ENCODE measurements at regions of chr1 and their contacts with region 1.

Region 1: GRCh38 chr1:91165033-91165654 is 143.3 kb upstream of the ZNF644 start:
- DNase-seq: peak; percentile 29
- ATAC-seq: peak; percentile 97
- H3K4me3 ChIP-seq: peak overlapping the region in 1 of 3 experiments; percentile 25; a peak in 1 of 6 replicates
- H3K27ac ChIP-seq: no peak overlapping the region
- H3K4me1 ChIP-seq: no peaks in the 10 kb centered on the region
- H3K27me3 ChIP-seq: peaks cover 1 to 9% of the 10 kb centered on the region in 2 experiments; a peak in 2 of 5 replicates
- CTCF ChIP-seq: peak; percentile 93
- EP300 ChIP-seq: no peak
- POLR2A ChIP-seq: no peak
- RAD21 ChIP-seq: peak; percentile 67; the same call in 1 of the 2 replicates

Region 2: GRCh38 chr1:90045853-90046563 is 1119.1 kb before region 1 on chr1:
- CTCF ChIA-PET with region 1: interaction called, 4 read pairs
- POLR2A ChIA-PET with region 1: no interaction called
- in situ Hi-C with region 1: no loop called
- intact Hi-C with region 1: loop called (anchors 2 kb)
- DNase-seq: peak; percentile 11
- ATAC-seq: peak; percentile 77
- H3K4me3 ChIP-seq: no peak overlapping the region
- H3K27ac ChIP-seq: no peak overlapping the region
- H3K4me1 ChIP-seq: peaks cover 19% of the 10 kb centered on the region
- H3K27me3 ChIP-seq: peaks cover 0 to 7% of the 10 kb centered on the region in 2 experiments; a peak in 2 of 5 replicates
- CTCF ChIP-seq: peak; percentile 66
- EP300 ChIP-seq: no peak
- POLR2A ChIP-seq: no peak
- RAD21 ChIP-seq: 0 out of 2 replicates have a peak, but pooled peaks have one; percentile 16

Region 3: GRCh38 chr1:90580176-90580575 is 585.0 kb before region 1 on chr1:
- CTCF ChIA-PET with region 1: no interaction called
- POLR2A ChIA-PET with region 1: no interaction called
- in situ Hi-C with region 1: no loop called
- intact Hi-C with region 1: loop called (anchors 10 kb)
- DNase-seq: no peak
- ATAC-seq: no peak
- H3K4me3 ChIP-seq: no peak overlapping the region
- H3K27ac ChIP-seq: no peak overlapping the region
- H3K4me1 ChIP-seq: no peaks in the 10 kb centered on the region
- H3K27me3 ChIP-seq: no peaks in the 10 kb centered on the region
- CTCF ChIP-seq: no peak
- EP300 ChIP-seq: no peak
- POLR2A ChIP-seq: no peak
- RAD21 ChIP-seq: no peak

Region 4: DNA sequence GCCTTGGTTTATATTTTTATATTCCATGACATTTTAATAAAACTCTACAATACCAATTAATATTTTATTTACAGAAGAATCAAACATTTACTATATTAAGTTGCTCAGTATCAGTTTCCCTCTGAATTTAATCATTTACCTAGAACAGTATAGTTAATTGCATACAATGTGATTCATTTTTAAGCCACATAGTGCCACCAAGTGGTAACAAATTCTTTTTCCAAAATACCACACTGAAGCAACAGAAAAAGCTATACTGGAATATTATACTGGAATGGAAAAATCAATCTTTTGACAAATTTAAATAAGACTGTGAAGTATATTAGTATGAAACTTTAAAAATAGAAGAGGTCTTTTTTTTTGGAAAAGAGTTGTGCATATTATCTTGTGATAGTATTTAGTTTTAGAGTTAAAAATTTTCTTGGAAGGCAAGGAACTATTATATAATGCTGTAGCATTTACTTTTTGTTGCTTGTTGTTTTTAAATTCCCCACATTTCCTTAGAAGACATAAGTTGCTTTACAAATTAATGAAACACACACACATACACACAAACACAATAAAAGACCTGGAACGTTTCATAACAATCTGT is 200.6 kb before region 1 on chr1:
- CTCF ChIA-PET with region 1: no interaction called
- POLR2A ChIA-PET with region 1: no interaction called
- in situ Hi-C with region 1: no loop called
- intact Hi-C with region 1: loop called (anchors 10 kb)
- DNase-seq: peak; percentile 21
- ATAC-seq: no peak; the same call in 2 of the 3 replicates
- H3K4me3 ChIP-seq: no peak overlapping the region
- H3K27ac ChIP-seq: no peak overlapping the region
- H3K4me1 ChIP-seq: peaks cover 13% of the 10 kb centered on the region
- H3K27me3 ChIP-seq: no peaks in the 10 kb centered on the region
- CTCF ChIP-seq: peak; percentile 49
- EP300 ChIP-seq: no peak
- POLR2A ChIP-seq: no peak
- RAD21 ChIP-seq: no peak

Region 5: GRCh38 chr1:90989990-90990389 is 175.2 kb before region 1 on chr1:
- CTCF ChIA-PET with region 1: no interaction called
- POLR2A ChIA-PET with region 1: no interaction called
- in situ Hi-C with region 1: no loop called
- intact Hi-C with region 1: no loop called
- DNase-seq: no peak
- ATAC-seq: no peak
- H3K4me3 ChIP-seq: no peak overlapping the region
- H3K27ac ChIP-seq: no peak overlapping the region
- H3K4me1 ChIP-seq: no peaks in the 10 kb centered on the region
- H3K27me3 ChIP-seq: no peaks in the 10 kb centered on the region
- CTCF ChIP-seq: no peak
- EP300 ChIP-seq: no peak
- POLR2A ChIP-seq: no peak
- RAD21 ChIP-seq: no peak

Region 6: DNA sequence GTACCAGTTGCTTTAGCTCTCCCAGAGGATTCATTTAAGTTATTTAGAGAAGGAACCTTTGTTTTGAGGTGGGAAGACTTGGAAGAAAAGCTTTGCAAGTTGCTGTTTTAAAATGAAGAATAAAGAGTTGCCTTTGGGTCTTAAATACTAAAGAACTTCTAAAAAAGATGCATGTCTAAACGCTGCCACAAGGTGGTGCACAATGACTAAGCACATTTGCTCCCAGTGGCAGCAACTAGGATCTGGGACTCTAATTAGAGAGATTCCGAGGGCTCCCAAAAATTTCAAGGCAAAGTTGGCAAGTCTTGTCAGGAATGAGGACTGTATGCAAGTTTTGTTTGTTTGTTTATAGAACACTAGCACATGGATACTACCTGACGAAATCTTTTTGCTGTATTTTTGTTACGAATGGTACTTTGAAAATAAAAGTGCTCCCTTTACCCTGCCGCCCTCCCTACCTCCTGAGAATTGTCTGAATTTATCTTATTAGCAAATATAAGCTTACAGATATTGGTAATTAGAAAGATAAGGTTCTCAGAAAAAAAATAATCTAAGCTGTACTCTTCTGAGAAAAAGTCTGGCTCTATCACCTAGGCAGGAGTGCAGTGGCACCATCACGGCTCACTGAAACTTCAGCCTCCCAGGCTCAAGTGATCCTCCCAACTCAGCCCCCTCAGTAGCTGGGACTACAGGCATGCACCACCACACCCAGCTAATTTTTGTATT is 117.7 kb after region 1 on chr1:
- CTCF ChIA-PET with region 1: interaction called, 16 read pairs
- POLR2A ChIA-PET with region 1: no interaction called
- in situ Hi-C with region 1: loop called (anchors 5 kb)
- intact Hi-C with region 1: loop called (anchors 1 kb)
- DNase-seq: peak; percentile 64
- ATAC-seq: peak; percentile 79
- H3K4me3 ChIP-seq: no peak overlapping the region
- H3K27ac ChIP-seq: no peak overlapping the region
- H3K4me1 ChIP-seq: no peaks in the 10 kb centered on the region
- H3K27me3 ChIP-seq: no peaks in the 10 kb centered on the region
- CTCF ChIP-seq: peak; percentile 71
- EP300 ChIP-seq: no peak
- POLR2A ChIP-seq: no peak
- RAD21 ChIP-seq: peak; percentile 52; the same call in 1 of the 2 replicates

Measured in HepG2 (cell line).